B cell (primary cell): ENCODE measurements at regions of chr3 and their contacts with region 1.

Region 1: GRCh38 chr3:72280876-72281275 is 495.9 kb upstream of the PROK2 start:
- DNase-seq: no peak
- ATAC-seq: no peak
- H3K4me3 ChIP-seq: no peak overlapping the region
- H3K4me3 Mint-ChIP-seq: no peak overlapping the region
- H3K27ac ChIP-seq: no peak overlapping the region
- H3K27ac Mint-ChIP-seq: no peak overlapping the region
- H3K4me1 ChIP-seq: peaks cover 13 to 18% of the 10 kb centered on the region in 2 donors
- H3K4me1 Mint-ChIP-seq: peaks cover 22% of the 10 kb centered on the region
- H3K27me3 ChIP-seq: no peaks in the 10 kb centered on the region
- H3K27me3 Mint-ChIP-seq: peaks cover 6% of the 10 kb centered on the region
- CTCF ChIP-seq: no peak

Region 2: GRCh38 chr3:70431911-70432310 is 1849.0 kb before region 1 on chr3:
- CTCF ChIA-PET with region 1: no interaction called
- POLR2A ChIA-PET with region 1: no interaction called
- intact Hi-C with region 1: no loop called
- DNase-seq: no peak
- ATAC-seq: no peak
- H3K4me3 ChIP-seq: no peak overlapping the region
- H3K4me3 Mint-ChIP-seq: no peak overlapping the region
- H3K27ac ChIP-seq: no peak overlapping the region
- H3K27ac Mint-ChIP-seq: no peak overlapping the region
- H3K4me1 ChIP-seq: no peaks in the 10 kb centered on the region
- H3K4me1 Mint-ChIP-seq: no peaks in the 10 kb centered on the region
- H3K27me3 ChIP-seq: no peaks in the 10 kb centered on the region
- H3K27me3 Mint-ChIP-seq: peaks cover 3% of the 10 kb centered on the region
- CTCF ChIP-seq: no peak

Region 3: GRCh38 chr3:72144773-72145505 is 135.9 kb before region 1 on chr3:
- CTCF ChIA-PET with region 1: no interaction called
- POLR2A ChIA-PET with region 1: interaction called, 11 read pairs
- intact Hi-C with region 1: no loop called
- DNase-seq: peak; percentile 60
- ATAC-seq: no peak
- H3K4me3 ChIP-seq: no peak overlapping the region
- H3K4me3 Mint-ChIP-seq: peak overlapping the region; percentile 11
- H3K27ac ChIP-seq: no peak overlapping the region
- H3K27ac Mint-ChIP-seq: no peak overlapping the region
- H3K4me1 ChIP-seq: peaks cover 41 to 57% of the 10 kb centered on the region in 2 donors
- H3K4me1 Mint-ChIP-seq: peaks cover 60% of the 10 kb centered on the region
- H3K27me3 ChIP-seq: no peaks in the 10 kb centered on the region
- H3K27me3 Mint-ChIP-seq: no peaks in the 10 kb centered on the region
- CTCF ChIP-seq: no peak